Activated naive CD4-positive, alpha-beta T cell treated with anti-CD3 and anti-CD28 coated beads for 36 hours (primary cell): ENCODE measurements at regions of chr1 and their contacts with region 1.

Region 1: DNA sequence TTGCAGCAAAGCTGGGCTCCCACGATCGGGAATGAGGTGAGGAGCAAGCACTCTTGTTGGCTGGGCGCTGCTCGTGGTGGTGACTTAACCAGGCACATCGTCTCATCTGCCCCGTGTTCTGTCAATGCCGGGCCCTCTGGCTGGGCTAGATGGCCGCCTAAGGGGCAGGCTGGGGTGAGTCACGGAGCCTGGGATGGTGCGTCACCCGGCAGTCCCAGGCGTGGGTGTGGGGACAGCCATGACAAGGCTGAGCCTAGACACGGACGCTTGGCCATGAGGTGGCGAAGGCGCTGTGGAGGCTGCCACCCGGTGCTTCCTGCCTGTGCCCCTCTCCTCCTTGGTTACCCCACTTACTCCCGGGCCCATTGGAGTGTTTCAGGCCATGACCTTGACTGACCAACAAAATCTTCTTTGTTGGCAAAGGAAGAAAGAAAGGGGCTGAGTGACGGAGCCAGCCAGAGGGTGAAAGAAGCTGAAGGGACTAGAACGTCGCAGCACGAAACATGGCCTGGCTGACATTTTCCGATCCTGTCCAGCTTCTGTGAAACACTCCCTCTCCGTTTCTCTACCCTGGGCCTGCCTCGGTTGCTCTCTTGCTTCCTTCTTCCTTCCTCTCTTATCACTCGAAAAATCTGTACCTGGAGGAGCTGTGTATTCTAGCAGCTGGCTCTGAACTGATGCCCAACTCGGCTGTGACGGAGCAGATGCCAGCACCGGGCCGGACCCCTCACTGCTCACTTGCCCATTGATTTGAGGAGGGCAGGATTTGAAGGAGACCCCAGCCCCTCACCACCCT is 596 bp downstream of the CD247 start:
- DNase-seq: peak; percentile 95
- H3K4me3 Mint-ChIP-seq: peak overlapping the region; percentile 90
- H3K27ac Mint-ChIP-seq: peak overlapping the region; percentile 96
- H3K4me1 Mint-ChIP-seq: peaks cover 25% of the 10 kb centered on the region
- H3K27me3 Mint-ChIP-seq: no peaks in the 10 kb centered on the region

Region 2: DNA sequence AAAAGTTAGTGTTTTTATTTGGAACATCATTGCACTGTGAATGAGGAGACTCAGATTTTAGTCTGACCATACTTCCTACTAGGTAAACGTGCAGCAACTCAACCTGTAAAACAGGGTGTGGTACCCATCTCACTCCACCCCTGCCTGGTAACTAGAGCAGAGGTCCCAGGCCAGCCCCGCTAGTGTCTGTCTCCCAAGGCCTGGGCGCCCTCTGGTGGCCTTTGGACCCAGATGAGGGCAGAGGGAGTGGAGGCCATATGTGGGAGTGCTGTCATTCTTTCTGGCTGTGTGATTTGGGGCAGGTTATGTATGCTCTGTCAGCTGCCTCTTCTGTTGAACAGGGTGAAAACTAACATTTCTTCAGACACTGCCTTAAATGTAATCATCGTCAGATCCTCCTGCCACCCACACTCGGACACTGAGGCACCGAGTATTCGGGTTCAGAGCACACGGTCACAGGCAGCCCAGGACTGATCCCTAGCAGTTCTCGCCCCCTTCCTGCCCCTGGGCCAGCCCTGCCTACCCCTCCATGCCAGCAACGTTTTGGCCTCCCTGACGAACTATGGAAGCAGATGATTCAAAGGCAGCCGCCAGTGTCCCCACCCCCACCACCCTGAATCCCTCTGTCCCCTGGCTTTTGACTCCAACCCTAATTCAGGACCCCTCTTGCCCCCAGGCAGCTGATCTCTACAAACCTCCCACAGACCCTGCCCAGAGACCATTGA is 75.4 kb before region 1 on chr1:
- CTCF ChIA-PET with region 1: interaction called, 10 read pairs
- intact Hi-C with region 1: loop called (anchors 1 kb)
- DNase-seq: peak; percentile 93
- H3K4me3 Mint-ChIP-seq: no peak overlapping the region
- H3K27ac Mint-ChIP-seq: peak overlapping the region; percentile 79
- H3K4me1 Mint-ChIP-seq: peaks cover 74% of the 10 kb centered on the region
- H3K27me3 Mint-ChIP-seq: no peaks in the 10 kb centered on the region

Region 3: GRCh38 chr1:167486090-167486824 is 31.5 kb before region 1 on chr1:
- CTCF ChIA-PET with region 1: interaction called, 5 read pairs
- intact Hi-C with region 1: loop called (anchors 1 kb)
- DNase-seq: peak; percentile 46
- H3K4me3 Mint-ChIP-seq: peak overlapping the region; percentile 48
- H3K27ac Mint-ChIP-seq: peak overlapping the region; percentile 85
- H3K4me1 Mint-ChIP-seq: peaks cover 95% of the 10 kb centered on the region
- H3K27me3 Mint-ChIP-seq: no peaks in the 10 kb centered on the region

Region 4: DNA sequence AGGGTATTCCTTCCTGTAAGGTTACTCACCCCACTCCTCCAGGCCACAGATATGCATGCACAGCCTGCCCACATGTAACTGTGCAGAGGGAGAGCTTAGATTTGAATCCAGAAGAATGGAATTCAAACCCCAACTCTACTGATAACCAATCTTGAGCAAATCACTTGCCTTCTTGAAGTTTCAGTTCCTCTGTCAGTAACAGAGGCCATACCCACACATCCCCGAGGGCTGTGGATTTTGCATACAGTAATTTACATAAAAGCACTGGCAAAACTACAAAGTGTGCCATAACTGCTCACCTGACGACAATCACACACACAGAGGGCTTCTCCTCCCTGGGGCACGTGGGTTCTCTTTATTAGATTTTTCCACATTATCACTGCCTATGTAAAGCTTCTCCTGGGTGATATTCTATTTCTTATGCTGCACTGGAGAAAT is 18.1 kb before region 1 on chr1:
- CTCF ChIA-PET with region 1: interaction called, 14 read pairs
- intact Hi-C with region 1: loop called (anchors 1 kb)
- DNase-seq: peak; percentile 59
- H3K4me3 Mint-ChIP-seq: peak overlapping the region; percentile 10
- H3K27ac Mint-ChIP-seq: peak overlapping the region; percentile 87
- H3K4me1 Mint-ChIP-seq: peaks cover 97% of the 10 kb centered on the region
- H3K27me3 Mint-ChIP-seq: no peaks in the 10 kb centered on the region

Region 5: DNA sequence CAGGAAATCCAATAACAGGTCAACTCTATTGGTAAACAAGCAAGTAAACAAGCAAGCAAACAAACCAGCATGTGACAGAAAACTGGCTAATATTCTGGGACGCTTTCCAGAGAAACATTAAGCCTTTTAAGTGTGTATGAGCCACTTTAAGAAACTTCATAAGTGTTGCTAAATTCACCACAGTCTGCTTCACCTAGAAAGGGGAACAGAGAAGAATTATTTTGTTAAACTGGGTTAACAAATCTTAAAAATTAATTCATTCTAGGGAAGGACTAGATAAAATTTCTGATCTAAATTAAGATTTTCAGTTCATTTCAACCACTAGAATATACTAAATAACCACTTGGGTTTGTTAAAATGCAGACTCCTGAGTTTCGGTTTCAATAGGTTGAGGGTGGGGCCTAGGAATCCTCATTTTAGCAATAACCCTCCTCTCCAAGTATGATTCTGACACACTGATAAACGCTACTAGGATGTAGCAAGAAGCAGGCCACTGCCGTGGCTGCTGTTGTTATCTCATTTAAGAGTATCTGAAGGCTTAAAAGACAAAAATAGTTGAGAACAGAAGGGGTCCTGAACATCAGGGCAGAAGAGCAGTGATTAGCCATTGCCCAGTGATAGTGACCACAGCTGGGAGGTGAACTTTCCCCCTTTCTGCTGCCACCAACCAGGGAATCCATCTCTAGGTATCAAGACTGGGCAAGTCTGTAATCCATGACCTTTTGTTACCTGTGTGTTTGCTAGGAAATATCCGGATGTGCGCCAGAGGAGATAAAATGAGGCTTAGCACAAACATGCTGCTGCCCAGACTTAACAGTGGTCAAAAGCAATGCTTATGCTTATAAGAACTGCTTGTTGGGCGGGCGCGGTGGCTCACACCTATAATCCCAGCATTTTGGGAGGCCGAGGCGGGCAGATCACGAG is 24.6 kb after region 1 on chr1:
- CTCF ChIA-PET with region 1: interaction called, 12 read pairs
- intact Hi-C with region 1: no loop called
- DNase-seq: no peak
- H3K4me3 Mint-ChIP-seq: no peak overlapping the region
- H3K27ac Mint-ChIP-seq: no peak overlapping the region
- H3K4me1 Mint-ChIP-seq: peaks cover 34% of the 10 kb centered on the region
- H3K27me3 Mint-ChIP-seq: no peaks in the 10 kb centered on the region

Region 6: GRCh38 chr1:167617153-167618147 is 99.7 kb after region 1 on chr1:
- CTCF ChIA-PET with region 1: no interaction called
- intact Hi-C with region 1: no loop called
- DNase-seq: peak; percentile 46
- H3K4me3 Mint-ChIP-seq: peak overlapping the region; percentile 70
- H3K27ac Mint-ChIP-seq: peak overlapping the region; percentile 90
- H3K4me1 Mint-ChIP-seq: peaks cover 48% of the 10 kb centered on the region
- H3K27me3 Mint-ChIP-seq: no peaks in the 10 kb centered on the region